G401 (cell line): ENCODE measurements at regions of chr17 and their contacts with region 1.

Region 1: DNA sequence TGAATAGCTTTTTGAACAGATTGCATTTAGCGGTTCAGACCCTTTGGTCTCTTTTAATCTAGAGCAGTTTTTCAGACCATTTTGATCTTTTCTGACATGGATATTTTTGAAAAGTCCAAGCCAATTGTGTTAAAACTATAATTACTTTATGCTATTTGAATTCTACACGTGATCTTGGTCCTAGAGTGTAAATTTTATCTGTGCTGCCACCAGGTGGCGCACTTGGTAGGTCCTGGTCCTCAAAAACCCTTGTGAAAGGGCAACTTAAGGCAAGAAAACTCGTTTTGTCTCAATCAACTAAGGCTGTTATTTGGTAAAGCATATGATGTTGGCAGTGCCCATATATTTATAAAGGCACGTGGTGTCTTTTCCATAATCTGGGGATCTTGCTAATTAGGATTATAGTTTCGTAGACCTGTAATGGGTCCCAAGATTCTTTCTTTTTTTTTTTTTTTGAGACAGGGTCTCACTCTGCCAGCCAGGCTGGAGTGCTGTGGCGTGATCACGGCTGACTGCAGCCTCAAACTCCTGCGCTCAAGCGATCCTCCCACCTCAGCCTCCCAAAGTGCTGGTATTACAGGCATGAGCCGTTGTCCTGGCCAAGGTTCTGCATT is 43.9 kb upstream of the TEX2 start:
- DNase-seq: peak; percentile 79

Region 2: DNA sequence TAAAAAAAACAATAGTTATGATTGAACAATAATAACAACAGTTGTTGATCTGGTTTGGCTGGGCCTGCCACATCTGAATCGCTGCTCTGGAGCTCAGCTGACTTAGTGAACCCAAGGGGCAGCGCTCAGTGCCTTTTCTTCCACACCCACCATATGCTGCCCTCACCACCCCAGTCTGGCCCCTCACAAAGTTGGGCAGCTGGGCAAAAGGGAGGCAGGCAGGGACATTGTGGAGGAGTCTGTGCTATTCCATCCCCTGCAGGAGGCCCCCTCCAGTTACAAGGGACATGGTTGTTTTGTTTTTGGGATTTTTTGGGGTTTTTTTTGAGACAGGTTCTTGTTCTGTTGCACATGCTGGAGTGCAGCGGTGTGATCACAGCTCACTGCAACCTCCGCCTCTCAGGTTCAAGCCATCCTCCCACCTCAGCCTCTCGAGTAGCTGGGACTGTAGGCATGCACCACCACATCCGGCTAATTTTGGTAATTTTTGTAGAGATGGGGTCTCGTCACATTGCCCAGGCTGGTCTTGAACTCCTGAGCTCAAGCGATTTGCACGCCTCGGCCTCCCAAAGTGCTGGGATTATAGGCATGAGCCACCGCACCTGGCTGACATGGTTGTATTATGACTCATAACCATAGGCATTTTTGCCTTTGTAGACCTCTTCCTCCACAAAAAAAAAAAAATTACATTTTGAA is 92.3 kb after region 1 on chr17:
- in situ Hi-C with region 1: loop called (anchors 10 kb)
- DNase-seq: no peak